GM12878 (cell line): ENCODE measurements at regions of chr3 and their contacts with region 1.

Region 1: DNA sequence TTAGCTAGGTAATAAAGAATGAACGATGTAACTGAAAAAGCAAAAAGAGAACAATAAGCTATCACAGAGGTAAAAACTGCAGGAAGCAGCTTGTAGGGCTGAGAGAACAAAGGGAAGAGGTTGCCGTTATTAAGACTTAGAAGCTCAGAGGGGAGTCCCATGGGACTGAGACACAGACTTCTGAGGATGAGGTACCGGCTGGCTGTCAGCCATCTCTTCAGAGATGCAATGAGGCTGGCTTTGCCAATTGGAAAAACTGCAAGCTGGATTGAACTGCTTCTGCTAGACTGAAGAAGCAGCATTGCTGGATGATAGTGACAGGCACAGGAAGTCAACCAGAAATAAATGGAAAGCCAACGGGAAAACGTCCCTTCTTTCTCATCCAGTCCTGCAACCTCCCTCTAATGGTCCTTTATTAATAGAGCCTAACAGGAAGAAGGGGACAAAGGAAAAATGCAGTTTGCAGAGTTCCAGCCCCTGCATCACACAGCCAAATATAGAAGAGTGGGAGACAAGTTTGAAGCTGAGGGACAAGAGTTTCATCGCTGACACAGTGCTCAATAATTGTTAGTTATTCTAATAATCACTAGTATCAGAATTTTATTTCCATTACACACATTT is 21.1 kb upstream of the KLHL6 start:
- DNase-seq: no peak
- ATAC-seq: no peak
- H3K4me3 ChIP-seq: no peak overlapping the region
- H3K27ac ChIP-seq: no peak overlapping the region
- H3K4me1 ChIP-seq: peaks cover 8% of the 10 kb centered on the region; the same call in 1 of the 2 replicates
- H3K27me3 ChIP-seq: peaks cover 0 to 21% of the 10 kb centered on the region in 2 experiments; a peak in 2 of 4 replicates
- CTCF ChIP-seq: no peak
- EP300 ChIP-seq: no peak
- POLR2A ChIP-seq: no peak
- RAD21 ChIP-seq: no peak

Region 2: GRCh38 chr3:183564046-183564445 is 12.6 kb before region 1 on chr3:
- CTCF ChIA-PET with region 1: interaction called, 12 read pairs
- POLR2A ChIA-PET with region 1: interaction called, 5 read pairs
- RAD21 ChIA-PET with region 1: interaction called, 13 read pairs
- SMC1A ChIA-PET with region 1: interaction called, 9 read pairs
- in situ Hi-C with region 1: no loop called
- intact Hi-C with region 1: no loop called
- DNase-seq: no peak
- ATAC-seq: peak; percentile 20
- H3K4me3 ChIP-seq: no peak overlapping the region
- H3K27ac ChIP-seq: no peak overlapping the region
- H3K4me1 ChIP-seq: no peaks in the 10 kb centered on the region; the same call in 1 of the 2 replicates
- H3K27me3 ChIP-seq: no peaks in the 10 kb centered on the region
- CTCF ChIP-seq: no peak
- EP300 ChIP-seq: no peak
- POLR2A ChIP-seq: no peak
- RAD21 ChIP-seq: no peak

Region 3: DNA sequence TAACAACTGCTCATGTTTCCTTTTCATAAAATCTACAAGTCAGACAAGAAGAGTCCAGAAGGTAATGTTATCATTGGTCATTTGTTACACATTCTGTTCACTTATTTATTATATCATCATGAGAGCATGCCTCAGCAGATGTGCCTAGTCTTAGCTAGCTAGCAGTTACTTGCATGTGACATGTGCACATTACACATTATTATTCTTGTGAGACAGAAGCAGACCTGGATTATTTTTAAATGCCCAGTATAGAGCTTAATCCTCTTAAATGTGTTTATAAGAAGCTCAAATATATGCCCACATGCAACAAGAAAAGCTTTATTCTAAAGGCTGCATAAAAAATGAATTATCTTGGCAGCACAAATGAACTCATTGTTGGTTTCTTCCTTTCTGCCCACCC is 133.6 kb after region 1 on chr3:
- CTCF ChIA-PET with region 1: no interaction called
- POLR2A ChIA-PET with region 1: no interaction called
- RAD21 ChIA-PET with region 1: no interaction called
- SMC1A ChIA-PET with region 1: no interaction called
- in situ Hi-C with region 1: no loop called
- intact Hi-C with region 1: no loop called
- DNase-seq: no peak
- ATAC-seq: no peak
- H3K4me3 ChIP-seq: no peak overlapping the region
- H3K27ac ChIP-seq: no peak overlapping the region
- H3K4me1 ChIP-seq: no peaks in the 10 kb centered on the region
- H3K27me3 ChIP-seq: no peaks in the 10 kb centered on the region
- CTCF ChIP-seq: no peak
- EP300 ChIP-seq: no peak
- POLR2A ChIP-seq: no peak
- RAD21 ChIP-seq: no peak